SK-N-SH (cell line): ENCODE measurements at regions of chr22 and their contacts with region 1.

Region 1: DNA sequence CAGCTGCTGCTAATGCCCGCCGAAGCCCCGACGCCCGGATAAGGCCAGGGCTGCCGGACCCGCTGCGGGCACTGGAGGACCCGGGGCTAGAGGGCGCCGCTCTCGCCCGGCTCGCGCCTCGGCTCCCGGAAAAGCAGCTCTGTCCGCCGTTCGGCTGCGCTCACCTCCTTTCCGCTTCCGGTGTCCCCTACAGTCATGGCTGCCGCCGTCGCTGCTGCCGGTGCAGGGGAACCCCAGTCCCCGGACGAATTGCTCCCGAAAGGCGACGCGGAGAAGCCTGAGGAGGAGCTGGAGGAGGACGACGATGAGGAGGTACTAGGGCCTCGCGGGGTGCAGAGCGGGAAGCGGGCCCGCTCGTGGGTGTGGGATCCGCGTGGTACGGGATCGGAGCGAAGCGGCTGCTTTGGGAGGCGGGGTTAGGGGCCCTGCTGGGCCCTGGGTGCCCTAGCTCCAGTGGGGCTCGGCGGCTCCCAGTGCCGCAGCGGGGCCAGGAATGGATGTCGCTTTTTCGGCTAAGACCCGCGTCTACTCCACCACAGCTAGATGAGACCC is at the start of gene TOMM22:
- DNase-seq: peak; percentile 91
- H3K4me3 ChIP-seq: peak within 1 kb of the TSS; percentile 72 to 80
- H3K27ac ChIP-seq: peak within 1 kb of the TSS; percentile 22 to 47; a peak in 2 of 4 replicates
- H3K4me1 ChIP-seq: no peaks in the 10 kb centered on the region; a peak in 1 of 4 replicates
- H3K27me3 ChIP-seq: no peaks in the 10 kb centered on the region
- CTCF ChIP-seq: peak; percentile 61
- EP300 ChIP-seq: 0 out of 4 replicates have a peak, but pooled peaks of 1 of the 2 experiments have one; percentile 7
- RAD21 ChIP-seq: no peak
- polyA plus RNA-seq, gene TOMM22: 33.1 and 33.6 TPM in 2 replicates

Region 2: DNA sequence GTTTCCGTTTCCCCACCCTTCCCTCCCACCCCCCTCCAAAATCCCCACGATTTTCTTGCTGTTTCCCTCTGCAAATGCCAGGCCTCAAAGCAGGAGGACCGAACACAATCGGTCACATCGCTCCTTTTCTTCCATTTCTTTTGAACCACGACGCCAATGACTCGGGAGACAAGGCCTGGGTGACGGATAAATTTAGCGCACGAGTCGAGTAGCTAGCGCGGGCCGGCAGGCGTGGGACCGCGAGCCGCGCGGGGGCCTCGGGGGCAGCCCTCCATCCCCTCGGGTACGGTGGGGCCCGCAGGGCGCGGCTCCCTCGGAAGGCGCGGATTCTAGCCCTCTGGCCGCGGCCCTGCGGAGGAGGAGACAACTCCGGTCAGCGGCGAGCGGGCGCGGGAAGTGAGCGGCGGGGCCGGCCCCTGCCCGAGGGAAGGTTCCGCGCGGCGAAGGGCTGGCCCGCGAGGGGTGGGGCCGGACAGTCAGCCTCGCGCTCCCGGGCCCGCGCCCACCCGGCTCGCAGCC is 18.5 kb after region 1 on chr22:
- CTCF ChIA-PET with region 1: interaction called, 13 read pairs
- POLR2A ChIA-PET with region 1: interaction called, 8 read pairs
- DNase-seq: peak; percentile 82
- H3K4me3 ChIP-seq: peak overlapping the region; percentile 65 to 70
- H3K27ac ChIP-seq: peak overlapping the region; percentile 64 to 75
- H3K4me1 ChIP-seq: peaks cover 10 to 20% of the 10 kb centered on the region in 2 experiments; a peak in 2 of 4 replicates
- H3K27me3 ChIP-seq: no peaks in the 10 kb centered on the region
- CTCF ChIP-seq: no peak
- EP300 ChIP-seq: no peak
- RAD21 ChIP-seq: no peak

Region 3: DNA sequence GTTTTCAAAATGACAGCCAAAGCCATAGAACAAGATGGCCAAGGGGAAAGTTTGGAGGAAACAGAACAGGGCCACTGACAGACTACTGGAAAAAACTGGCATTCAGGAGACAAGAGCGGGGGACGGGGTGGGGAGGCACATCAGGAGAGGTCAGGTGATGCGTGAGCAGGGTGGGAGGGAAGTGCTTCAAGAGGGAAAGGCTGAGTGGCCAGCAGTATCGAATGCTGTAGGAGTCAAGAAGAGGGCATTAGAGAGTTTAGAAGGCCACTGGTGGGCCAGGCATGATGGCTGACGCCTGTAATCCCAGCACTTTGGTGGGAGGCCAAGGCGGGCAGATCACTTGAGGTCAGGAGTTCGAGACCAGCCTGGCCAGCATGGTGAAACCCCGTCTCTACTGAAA is 32.1 kb after region 1 on chr22:
- CTCF ChIA-PET with region 1: no interaction called
- POLR2A ChIA-PET with region 1: no interaction called
- DNase-seq: no peak
- H3K4me3 ChIP-seq: no peak overlapping the region
- H3K27ac ChIP-seq: no peak overlapping the region
- H3K4me1 ChIP-seq: no peaks in the 10 kb centered on the region; a peak in 1 of 4 replicates
- H3K27me3 ChIP-seq: no peaks in the 10 kb centered on the region
- CTCF ChIP-seq: no peak
- EP300 ChIP-seq: no peak
- RAD21 ChIP-seq: no peak